ENCODE measurements at regions of chr3 and their contacts with region 1.

Region 1: GRCh38 chr3:151918253-151919029 is 45.0 kb downstream of the SUCNR1 start:
- H3K4me3 ChIP-seq: no peak overlapping the region
- H3K27ac ChIP-seq: no peak overlapping the region
- H3K4me1 ChIP-seq: no peaks in the 10 kb centered on the region
- CTCF ChIP-seq: no peak

Region 2: DNA sequence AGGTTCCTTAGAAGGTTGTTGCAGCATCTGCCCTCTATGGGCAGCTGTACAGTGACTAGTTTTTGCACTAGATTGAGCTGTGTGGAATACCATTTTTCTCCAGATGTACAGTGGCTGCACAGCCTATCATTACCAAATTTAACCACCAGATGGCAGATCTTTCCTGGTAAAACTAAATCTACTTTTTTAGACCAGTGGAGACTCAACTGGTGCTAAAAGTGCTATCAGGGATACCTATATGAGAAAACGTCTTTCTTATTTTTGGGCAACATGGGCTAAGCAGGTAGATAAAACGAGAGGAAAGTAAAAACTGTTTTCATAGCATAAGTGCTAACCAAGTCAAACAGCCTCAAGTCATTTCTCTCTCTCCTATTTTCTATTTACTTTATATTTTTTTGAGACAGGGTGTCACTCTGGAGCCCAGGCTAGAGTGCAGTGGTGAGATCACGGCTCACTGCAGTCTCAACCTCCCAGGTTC is 478.8 kb before region 1 on chr3:
- CTCF ChIA-PET with region 1: interaction called, 15 read pairs
- POLR2A ChIA-PET with region 1: no interaction called
- H3K4me3 ChIP-seq: no peak overlapping the region
- H3K27ac ChIP-seq: no peak overlapping the region
- H3K4me1 ChIP-seq: no peaks in the 10 kb centered on the region
- CTCF ChIP-seq: peak; percentile 46

Measured in HEK293 (cell line).